OCI-LY7 (cell line): ENCODE measurements at regions of chr6 and their contacts with region 1.

Region 1: GRCh38 chr6:41591859-41592502 is 45.8 kb downstream of the FOXP4 start:
- DNase-seq: peak; percentile 62
- H3K4me3 ChIP-seq: no peak overlapping the region
- H3K27ac ChIP-seq: no peak overlapping the region
- H3K4me1 ChIP-seq: no peaks in the 10 kb centered on the region
- CTCF ChIP-seq: peak; percentile 89

Region 2: DNA sequence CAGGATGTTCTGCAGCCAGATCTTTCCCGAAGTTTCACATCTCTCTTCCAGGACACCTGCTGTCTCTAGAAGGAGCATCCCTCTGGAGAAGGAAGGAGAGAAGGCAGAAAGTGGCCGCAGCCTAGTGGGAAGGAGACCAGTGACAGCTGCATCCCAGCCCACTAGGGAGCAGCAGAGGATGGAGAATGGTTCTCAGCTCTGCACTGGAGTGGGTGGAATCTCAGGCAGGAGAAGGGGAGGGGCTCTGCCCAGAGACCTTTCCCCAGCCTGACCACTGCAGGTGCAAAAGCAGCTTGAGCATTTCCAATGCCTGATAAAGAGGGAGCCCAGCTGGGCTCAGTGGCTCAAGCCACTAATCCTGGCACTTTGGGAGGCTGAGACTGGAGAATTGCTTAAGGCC is 224.3 kb before region 1 on chr6:
- CTCF ChIA-PET with region 1: no interaction called
- POLR2A ChIA-PET with region 1: no interaction called
- intact Hi-C with region 1: loop called (anchors 1 kb)
- DNase-seq: peak; percentile 18
- H3K4me3 ChIP-seq: no peak overlapping the region
- H3K27ac ChIP-seq: no peak overlapping the region
- H3K4me1 ChIP-seq: no peaks in the 10 kb centered on the region
- CTCF ChIP-seq: peak; percentile 66

Region 3: GRCh38 chr6:41424370-41425058 is 167.5 kb before region 1 on chr6:
- CTCF ChIA-PET with region 1: interaction called, 3 read pairs
- POLR2A ChIA-PET with region 1: no interaction called
- intact Hi-C with region 1: loop called (anchors 1 kb)
- DNase-seq: peak; percentile 77
- H3K4me3 ChIP-seq: no peak overlapping the region
- H3K27ac ChIP-seq: no peak overlapping the region
- H3K4me1 ChIP-seq: peaks cover 10% of the 10 kb centered on the region
- CTCF ChIP-seq: peak; percentile 93

Region 4: DNA sequence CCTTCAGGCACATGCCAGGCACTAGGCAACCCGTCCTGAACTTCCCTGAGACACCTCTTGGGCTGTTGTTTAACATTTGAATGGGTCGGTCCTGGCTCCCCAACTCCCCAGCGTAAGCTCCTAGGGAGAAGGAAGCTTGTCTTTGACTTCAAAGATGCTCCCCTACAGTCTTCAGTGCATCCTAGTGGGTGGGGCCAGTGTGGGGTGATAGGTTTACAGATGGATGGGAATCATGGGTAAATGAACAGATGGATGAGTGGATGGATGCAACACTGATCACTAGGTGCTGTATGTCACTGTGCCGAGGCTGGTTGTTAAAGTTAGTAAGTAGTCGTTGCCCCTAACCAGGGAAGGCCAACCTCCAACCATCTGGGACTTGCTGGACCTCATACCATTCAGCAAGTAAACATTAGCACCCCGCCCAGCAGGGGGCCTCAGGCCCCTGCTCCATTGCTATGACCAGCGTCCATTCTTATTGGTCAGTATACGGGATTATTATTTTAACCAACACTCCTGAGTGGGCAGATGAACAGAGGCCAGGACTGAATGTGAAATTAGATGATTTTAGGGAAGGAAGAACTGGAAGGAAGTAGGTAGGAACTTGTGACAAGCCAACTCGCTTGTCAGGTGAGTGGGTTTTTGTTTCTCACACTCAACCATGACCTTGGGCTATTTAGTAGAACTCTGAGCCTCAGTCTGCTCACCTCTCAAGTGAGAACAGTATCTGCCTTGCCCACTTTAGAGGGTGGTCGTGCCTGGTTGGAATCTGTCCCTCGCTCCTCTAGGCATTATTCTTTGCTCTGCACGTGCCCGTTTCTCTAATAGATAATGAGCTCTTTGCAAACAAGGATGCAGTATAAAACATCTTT is 128.7 kb before region 1 on chr6:
- CTCF ChIA-PET with region 1: no interaction called
- POLR2A ChIA-PET with region 1: interaction called, 3 read pairs
- intact Hi-C with region 1: loop called (anchors 1 kb)
- DNase-seq: peak; percentile 42
- H3K4me3 ChIP-seq: no peak overlapping the region
- H3K27ac ChIP-seq: no peak overlapping the region
- H3K4me1 ChIP-seq: no peaks in the 10 kb centered on the region
- CTCF ChIP-seq: peak; percentile 78